Activated B cell treated with CpG ODN at 0.5 μM for 24 hours (primary cell): ENCODE measurements at regions of chr2 and their contacts with region 1.

Region 1: GRCh38 chr2:43408407-43409160 is 182.2 kb upstream of the ZFP36L2 start:
- DNase-seq: no peak
- ATAC-seq: peak; percentile 97
- H3K4me3 Mint-ChIP-seq: peak overlapping the region; percentile 59
- H3K27ac Mint-ChIP-seq: peak overlapping the region; percentile 81
- H3K4me1 Mint-ChIP-seq: peaks cover 29% of the 10 kb centered on the region
- H3K27me3 Mint-ChIP-seq: no peaks in the 10 kb centered on the region
- CTCF ChIP-seq: no peak

Region 2: DNA sequence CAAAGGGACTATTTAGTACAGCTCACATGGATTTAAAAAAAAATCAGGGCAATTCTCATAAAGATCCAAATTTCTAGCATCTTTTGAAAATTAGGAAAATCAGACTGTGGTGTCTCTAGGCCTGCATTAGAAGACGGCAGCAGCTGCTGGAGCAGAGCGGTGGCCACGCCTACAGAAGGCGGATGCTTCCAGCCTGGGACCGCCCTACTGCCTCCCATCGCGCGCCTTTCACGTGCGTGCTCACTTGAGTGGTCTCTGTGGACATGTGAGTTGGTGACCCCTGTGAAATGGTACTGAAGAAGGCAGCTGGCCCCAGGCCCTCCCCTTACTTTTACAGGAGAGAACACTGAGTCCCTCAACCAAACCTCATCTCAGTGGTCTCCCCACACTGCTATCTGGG is 167.0 kb before region 1 on chr2:
- CTCF ChIA-PET with region 1: no interaction called
- POLR2A ChIA-PET with region 1: no interaction called
- intact Hi-C with region 1: no loop called
- DNase-seq: no peak
- ATAC-seq: no peak
- H3K4me3 Mint-ChIP-seq: no peak overlapping the region
- H3K27ac Mint-ChIP-seq: peak overlapping the region; percentile 22
- H3K4me1 Mint-ChIP-seq: peaks cover 40% of the 10 kb centered on the region
- H3K27me3 Mint-ChIP-seq: no peaks in the 10 kb centered on the region
- CTCF ChIP-seq: no peak

Region 3: GRCh38 chr2:43426305-43427031 is 17.9 kb after region 1 on chr2:
- CTCF ChIA-PET with region 1: interaction called, 4 read pairs
- POLR2A ChIA-PET with region 1: interaction called, 8 read pairs
- intact Hi-C with region 1: loop called (anchors 1 kb)
- DNase-seq: no peak
- ATAC-seq: peak; percentile 98
- H3K4me3 Mint-ChIP-seq: peak overlapping the region; percentile 61
- H3K27ac Mint-ChIP-seq: peak overlapping the region; percentile 70
- H3K4me1 Mint-ChIP-seq: peaks cover 37% of the 10 kb centered on the region
- H3K27me3 Mint-ChIP-seq: no peaks in the 10 kb centered on the region
- CTCF ChIP-seq: no peak